CD8-positive, alpha-beta memory T cell (primary cell): ENCODE measurements at regions of chr1 and their contacts with region 1.

Region 1: GRCh38 chr1:27332536-27333281 is 9.1 kb upstream of the SYTL1 start:
- DNase-seq: peak; percentile 46 to 73 (median 59)
- H3K4me3 ChIP-seq: no peak overlapping the region
- H3K4me3 Mint-ChIP-seq: peak overlapping the region in 1 of 7 donors; percentile 20
- H3K27ac ChIP-seq: no peak overlapping the region
- H3K27ac Mint-ChIP-seq: peak overlapping the region in 7 of 8 donors; percentile 9 to 88 (median 71)
- H3K4me1 ChIP-seq: peaks cover 16% of the 10 kb centered on the region
- H3K4me1 Mint-ChIP-seq: peaks cover 27 to 50% (median 30%) of the 10 kb centered on the region in 3 donors
- H3K27me3 ChIP-seq: no peaks in the 10 kb centered on the region
- H3K27me3 Mint-ChIP-seq: no peaks in the 10 kb centered on the region

Region 2: DNA sequence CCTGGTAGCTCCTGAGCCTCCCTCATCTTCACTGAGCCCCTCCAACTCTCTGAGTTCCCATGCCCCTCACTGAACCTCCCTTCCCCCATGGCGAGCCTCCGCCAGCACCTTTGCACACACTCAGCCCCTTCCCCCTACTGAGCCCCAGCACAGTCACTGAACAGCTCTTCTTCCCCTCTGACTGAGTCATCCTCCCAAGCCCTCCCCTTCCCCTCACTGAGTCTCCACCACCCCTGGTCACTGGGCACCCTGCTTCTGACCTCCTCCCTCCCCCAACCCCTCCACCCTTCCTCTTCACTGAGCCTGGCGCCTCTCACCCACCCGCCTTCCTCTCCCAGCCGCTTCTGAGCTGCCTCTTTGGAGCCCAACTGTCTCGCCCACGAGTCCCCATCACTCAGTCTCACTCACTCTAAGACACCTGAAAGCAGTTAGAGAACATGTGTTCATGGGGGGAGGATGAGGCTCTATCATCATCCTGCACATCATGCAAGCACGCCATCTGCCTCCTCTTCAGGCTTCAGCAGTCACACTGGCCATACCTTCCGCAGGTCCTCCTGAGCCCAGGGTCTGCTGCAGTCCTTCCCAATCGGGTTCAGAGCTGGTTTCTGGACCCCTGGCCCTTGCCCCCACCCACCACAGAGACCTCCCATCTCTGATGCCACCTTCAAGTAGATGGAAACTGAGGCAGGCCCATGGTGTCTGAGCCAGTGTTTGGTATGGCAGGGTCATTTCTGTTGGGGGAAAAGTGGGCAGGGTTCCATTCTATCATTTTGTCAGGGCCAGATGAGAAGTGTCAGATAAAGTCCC is 341.2 kb before region 1 on chr1:
- CTCF ChIA-PET with region 1: no interaction called
- POLR2A ChIA-PET with region 1: no interaction called
- DNase-seq: no peak
- H3K4me3 ChIP-seq: no peak overlapping the region
- H3K4me3 Mint-ChIP-seq: peak overlapping the region in 4 of 7 donors; percentile 6 to 58 (median 18)
- H3K27ac ChIP-seq: no peak overlapping the region
- H3K27ac Mint-ChIP-seq: peak overlapping the region in 2 of 8 donors; percentile 35 to 77
- H3K4me1 ChIP-seq: peaks cover 11% of the 10 kb centered on the region
- H3K4me1 Mint-ChIP-seq: peaks cover 6 to 18% (median 8%) of the 10 kb centered on the region in 3 donors
- H3K27me3 ChIP-seq: peaks cover 34% of the 10 kb centered on the region
- H3K27me3 Mint-ChIP-seq: peaks cover 38 to 54% of the 10 kb centered on the region in 2 donors

Region 3: GRCh38 chr1:27321813-27322577 is 10.7 kb before region 1 on chr1 and contains the start of gene TMEM222:
- CTCF ChIA-PET with region 1: interaction called, 13 read pairs
- POLR2A ChIA-PET with region 1: no interaction called
- DNase-seq: peak; percentile 95 to 97 (median 97)
- H3K4me3 ChIP-seq: peak within 1 kb of the TSS; percentile 93
- H3K4me3 Mint-ChIP-seq: peak within 1 kb of the TSS; percentile 95 to 99 (median 97)
- H3K27ac ChIP-seq: peak within 1 kb of the TSS; percentile 95
- H3K27ac Mint-ChIP-seq: peak within 1 kb of the TSS; percentile 82 to 97 (median 96)
- H3K4me1 ChIP-seq: peaks cover 36% of the 10 kb centered on the region
- H3K4me1 Mint-ChIP-seq: peaks cover 40 to 58% (median 50%) of the 10 kb centered on the region in 3 donors
- H3K27me3 ChIP-seq: peaks cover 9% of the 10 kb centered on the region
- H3K27me3 Mint-ChIP-seq: peaks cover 4% of the 10 kb centered on the region in 2 donors
- total RNA-seq, gene TMEM222: 52.0 to 54.9 TPM

Region 4: GRCh38 chr1:27349784-27350662 is 17.3 kb after region 1 on chr1:
- CTCF ChIA-PET with region 1: interaction called, 99 read pairs
- POLR2A ChIA-PET with region 1: interaction called, 3 read pairs
- DNase-seq: no peak
- H3K4me3 ChIP-seq: no peak overlapping the region
- H3K4me3 Mint-ChIP-seq: peak overlapping the region in 1 of 7 donors; percentile 20
- H3K27ac ChIP-seq: no peak overlapping the region
- H3K27ac Mint-ChIP-seq: peak overlapping the region in 1 of 8 donors; percentile 46
- H3K4me1 ChIP-seq: peaks cover 11% of the 10 kb centered on the region
- H3K4me1 Mint-ChIP-seq: peaks cover 13 to 32% (median 14%) of the 10 kb centered on the region in 3 donors
- H3K27me3 ChIP-seq: no peaks in the 10 kb centered on the region
- H3K27me3 Mint-ChIP-seq: peaks cover 0 to 5% of the 10 kb centered on the region in 2 donors

Region 5: GRCh38 chr1:27357281-27358037 is 24.8 kb after region 1 on chr1:
- CTCF ChIA-PET with region 1: interaction called, 99 read pairs
- POLR2A ChIA-PET with region 1: interaction called, 7 read pairs
- DNase-seq: peak; percentile 72 to 88 (median 82)
- H3K4me3 ChIP-seq: peak overlapping the region; percentile 91
- H3K4me3 Mint-ChIP-seq: peak overlapping the region; percentile 70 to 89 (median 81)
- H3K27ac ChIP-seq: peak overlapping the region; percentile 47
- H3K27ac Mint-ChIP-seq: peak overlapping the region; percentile 59 to 94 (median 80)
- H3K4me1 ChIP-seq: peaks cover 46% of the 10 kb centered on the region
- H3K4me1 Mint-ChIP-seq: peaks cover 44 to 57% (median 53%) of the 10 kb centered on the region in 3 donors
- H3K27me3 ChIP-seq: no peaks in the 10 kb centered on the region
- H3K27me3 Mint-ChIP-seq: peaks cover 0 to 3% of the 10 kb centered on the region in 2 donors

Region 6: DNA sequence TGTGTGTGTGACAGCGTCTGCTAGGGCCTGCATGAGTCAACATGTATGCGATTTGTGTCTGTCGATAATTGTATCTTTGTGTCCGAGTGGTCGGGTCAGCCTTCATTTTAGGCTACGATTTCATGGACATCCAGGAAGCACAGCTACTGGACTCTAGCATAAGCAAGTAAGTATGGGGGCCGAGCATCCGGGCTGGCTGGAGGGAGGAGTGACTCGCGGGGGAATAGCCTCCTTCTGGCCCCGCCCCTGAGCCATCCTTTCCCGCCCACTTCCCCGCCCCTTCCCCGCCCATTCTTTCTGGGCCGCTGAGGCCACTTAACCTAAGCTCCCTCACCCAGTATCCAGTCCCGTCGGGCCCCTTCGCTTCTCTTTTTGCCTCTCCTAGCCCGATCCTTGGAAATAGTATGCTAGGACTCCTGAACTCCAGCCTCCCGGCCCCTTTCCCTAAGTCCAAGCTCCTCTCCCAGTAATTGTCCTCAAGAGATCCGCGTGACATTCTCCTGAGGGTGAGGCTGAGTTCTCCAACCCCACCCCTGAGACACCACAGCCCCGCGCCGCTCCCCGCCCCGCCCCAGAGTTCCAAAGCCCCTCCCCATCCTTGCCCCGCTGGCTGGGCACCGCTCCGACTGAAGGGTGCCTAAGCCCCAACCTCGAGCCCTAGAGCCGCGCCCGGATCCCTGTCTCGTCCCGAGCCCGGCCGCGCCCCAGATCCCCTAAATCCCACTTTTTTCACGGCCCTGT is 32.8 kb after region 1 on chr1:
- CTCF ChIA-PET with region 1: interaction called, 15 read pairs
- POLR2A ChIA-PET with region 1: interaction called, 3 read pairs
- DNase-seq: peak; percentile 63 to 83 (median 72)
- H3K4me3 ChIP-seq: peak overlapping the region; percentile 62
- H3K4me3 Mint-ChIP-seq: peak overlapping the region; percentile 85 to 95 (median 87)
- H3K27ac ChIP-seq: peak overlapping the region; percentile 47
- H3K27ac Mint-ChIP-seq: peak overlapping the region in 7 of 8 donors; percentile 51 to 93 (median 78)
- H3K4me1 ChIP-seq: peaks cover 19% of the 10 kb centered on the region
- H3K4me1 Mint-ChIP-seq: peaks cover 16 to 23% (median 22%) of the 10 kb centered on the region in 3 donors
- H3K27me3 ChIP-seq: no peaks in the 10 kb centered on the region
- H3K27me3 Mint-ChIP-seq: no peaks in the 10 kb centered on the region

Region 7: GRCh38 chr1:27383039-27383605 is 50.4 kb after region 1 on chr1 and contains the start of gene CD164L2:
- CTCF ChIA-PET with region 1: interaction called, 18 read pairs
- POLR2A ChIA-PET with region 1: no interaction called
- DNase-seq: peak in 3 of 5 donors; percentile 27 to 60 (median 36)
- H3K4me3 ChIP-seq: no peak within 1 kb of the TSS
- H3K4me3 Mint-ChIP-seq: no peak within 1 kb of the TSS
- H3K27ac ChIP-seq: no peak within 1 kb of the TSS
- H3K27ac Mint-ChIP-seq: no peak within 1 kb of the TSS
- H3K4me1 ChIP-seq: no peaks in the 10 kb centered on the region
- H3K4me1 Mint-ChIP-seq: no peaks in the 10 kb centered on the region
- H3K27me3 ChIP-seq: no peaks in the 10 kb centered on the region
- H3K27me3 Mint-ChIP-seq: peaks cover 2 to 8% of the 10 kb centered on the region in 2 donors
- total RNA-seq, gene CD164L2: not detected

Region 8: GRCh38 chr1:27392096-27392777 is 59.5 kb after region 1 on chr1 and contains the start of gene GPR3:
- CTCF ChIA-PET with region 1: interaction called, 30 read pairs
- POLR2A ChIA-PET with region 1: no interaction called
- DNase-seq: peak; percentile 87 to 94 (median 92)
- H3K4me3 ChIP-seq: peak within 1 kb of the TSS; percentile 69
- H3K4me3 Mint-ChIP-seq: peak within 1 kb of the TSS; percentile 30 to 88 (median 86)
- H3K27ac ChIP-seq: peak within 1 kb of the TSS; percentile 43
- H3K27ac Mint-ChIP-seq: peak within 1 kb of the TSS in 7 of 8 donors; percentile 0 to 95 (median 93)
- H3K4me1 ChIP-seq: peaks cover 17% of the 10 kb centered on the region
- H3K4me1 Mint-ChIP-seq: peaks cover 15 to 22% (median 21%) of the 10 kb centered on the region in 3 donors
- H3K27me3 ChIP-seq: no peaks in the 10 kb centered on the region
- H3K27me3 Mint-ChIP-seq: peaks cover 1 to 12% of the 10 kb centered on the region in 2 donors
- total RNA-seq, gene GPR3: 3.3 to 3.9 TPM